ENCODE measurements at regions of chr6 and their contacts with region 1.

Region 1: DNA sequence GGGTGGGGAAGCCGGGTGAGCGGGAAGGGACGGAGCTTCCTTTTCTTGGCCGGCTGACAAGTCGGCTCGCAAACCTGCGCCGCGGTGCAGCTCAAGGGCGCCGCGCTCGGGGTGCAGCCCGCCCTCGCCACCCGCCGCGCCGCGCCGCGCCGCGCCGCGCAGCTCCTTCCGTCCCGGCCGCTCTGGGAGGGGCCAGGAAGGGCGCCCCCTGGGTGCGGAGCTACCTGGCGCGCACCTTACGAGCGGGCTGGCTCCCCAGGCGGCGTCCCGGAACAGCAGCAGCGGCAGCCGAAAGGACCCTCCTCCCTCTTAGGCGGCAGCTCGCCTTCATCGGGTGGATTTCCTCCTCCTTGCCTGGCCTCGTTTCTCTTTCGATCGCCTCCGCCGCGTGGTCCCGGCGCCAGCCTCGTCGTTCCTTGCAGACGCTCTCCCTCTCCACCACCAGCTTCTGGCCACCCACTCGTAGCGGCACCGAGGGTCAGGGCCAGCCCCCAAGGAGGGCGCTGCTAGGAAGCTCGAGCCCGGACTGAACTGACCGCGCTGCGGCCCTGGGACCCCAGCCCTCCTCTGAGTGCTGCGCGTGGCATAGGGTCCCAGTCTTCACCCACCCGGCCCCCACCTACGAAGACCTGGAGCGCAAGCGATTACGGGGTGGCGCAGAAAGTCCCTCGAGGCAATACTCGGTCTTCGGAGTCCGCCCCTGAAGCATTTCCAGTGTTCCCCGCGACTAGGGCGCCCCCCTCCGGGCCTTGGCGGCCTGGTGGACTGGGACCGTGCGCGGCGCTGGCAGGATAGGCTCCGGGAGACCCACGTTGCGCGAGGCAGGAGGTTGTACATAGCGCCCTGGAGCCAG is at the start of gene MAP3K5:
- DNase-seq: peak; percentile 96
- ATAC-seq: peak; percentile 93 to 95
- H3K4me3 ChIP-seq: peak within 1 kb of the TSS; percentile 94
- H3K27ac ChIP-seq: peak within 1 kb of the TSS; percentile 98
- H3K4me1 ChIP-seq: peaks cover 32% of the 10 kb centered on the region
- H3K27me3 ChIP-seq: no peaks in the 10 kb centered on the region
- CTCF ChIP-seq: peak; percentile 90
- total RNA-seq, gene MAP3K5: 32.0 TPM

Region 2: GRCh38 chr6:136643850-136644596 is 148.6 kb before region 1 on chr6:
- intact Hi-C with region 1: loop called (anchors 10 kb)
- DNase-seq: peak; percentile 90
- ATAC-seq: peak; percentile 98
- H3K4me3 ChIP-seq: no peak overlapping the region
- H3K27ac ChIP-seq: no peak overlapping the region
- H3K4me1 ChIP-seq: peaks cover 24% of the 10 kb centered on the region
- H3K27me3 ChIP-seq: no peaks in the 10 kb centered on the region
- CTCF ChIP-seq: peak; percentile 88